Pancreas (tissue), 10 donors: ENCODE measurements at regions of chr14 and their contacts with region 1.

Region 1: DNA sequence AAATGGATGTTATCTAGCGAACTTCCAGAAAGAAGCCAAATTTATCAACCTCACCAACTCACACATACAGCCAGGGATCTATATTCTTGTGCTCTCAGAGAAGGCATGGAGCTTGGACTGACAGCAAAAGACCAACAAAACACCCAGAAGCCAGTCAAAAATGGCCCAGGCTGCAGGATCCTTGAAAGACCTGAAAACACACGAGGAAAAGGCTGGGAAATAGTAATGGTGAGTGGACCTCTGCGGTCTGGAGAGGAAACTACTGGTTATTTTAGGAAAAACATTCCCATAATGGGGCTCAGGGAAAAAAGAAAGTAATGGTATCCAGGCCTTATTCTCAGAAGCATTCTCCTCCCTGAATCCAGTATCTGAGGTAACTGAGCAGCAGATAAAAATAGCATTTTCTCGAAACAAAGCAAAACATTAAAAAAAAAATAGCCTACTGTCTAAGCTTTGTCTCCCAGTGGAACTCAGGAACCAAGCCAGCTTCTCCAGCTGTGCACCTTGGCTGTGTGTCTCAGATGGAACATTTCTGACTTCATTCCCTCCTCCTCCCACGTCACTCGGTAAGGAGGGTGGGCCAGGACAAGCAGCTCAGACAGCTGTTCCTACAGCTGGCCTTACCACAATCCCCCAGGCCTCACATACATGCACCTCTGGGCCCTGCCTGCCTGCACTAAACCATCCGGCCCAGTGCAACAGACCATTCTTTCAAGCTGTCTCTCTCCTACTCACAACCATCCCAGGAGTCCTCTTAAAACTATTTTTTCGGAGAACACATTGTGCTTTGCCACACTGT is 249.9 kb downstream of the DAD1 start:
- DNase-seq: peak in 2 of 6 donors; percentile 23 to 43
- ATAC-seq: peak in 3 of 4 donors; percentile 56 to 62 (median 58)
- H3K4me3 ChIP-seq: no peak overlapping the region
- H3K27ac ChIP-seq: no peak overlapping the region
- H3K4me1 ChIP-seq: peaks cover 0 to 7% (median 0%) of the 10 kb centered on the region in 3 donors
- H3K27me3 ChIP-seq: no peaks in the 10 kb centered on the region
- CTCF ChIP-seq: no peak

Region 2: GRCh38 chr14:22370084-22370847 is 31.1 kb after region 1 on chr14:
- intact Hi-C with region 1: loop called in 1 of 3 experiments (anchors 5 kb)
- DNase-seq: peak in 3 of 6 donors; percentile 9 to 64 (median 34)
- ATAC-seq: peak; percentile 48 to 93 (median 76)
- H3K4me3 ChIP-seq: no peak overlapping the region
- H3K27ac ChIP-seq: peak overlapping the region in 2 of 4 donors; percentile 51 to 64
- H3K4me1 ChIP-seq: peaks cover 0 to 3% (median 0%) of the 10 kb centered on the region in 3 donors
- H3K27me3 ChIP-seq: no peaks in the 10 kb centered on the region
- CTCF ChIP-seq: no peak

Region 3: DNA sequence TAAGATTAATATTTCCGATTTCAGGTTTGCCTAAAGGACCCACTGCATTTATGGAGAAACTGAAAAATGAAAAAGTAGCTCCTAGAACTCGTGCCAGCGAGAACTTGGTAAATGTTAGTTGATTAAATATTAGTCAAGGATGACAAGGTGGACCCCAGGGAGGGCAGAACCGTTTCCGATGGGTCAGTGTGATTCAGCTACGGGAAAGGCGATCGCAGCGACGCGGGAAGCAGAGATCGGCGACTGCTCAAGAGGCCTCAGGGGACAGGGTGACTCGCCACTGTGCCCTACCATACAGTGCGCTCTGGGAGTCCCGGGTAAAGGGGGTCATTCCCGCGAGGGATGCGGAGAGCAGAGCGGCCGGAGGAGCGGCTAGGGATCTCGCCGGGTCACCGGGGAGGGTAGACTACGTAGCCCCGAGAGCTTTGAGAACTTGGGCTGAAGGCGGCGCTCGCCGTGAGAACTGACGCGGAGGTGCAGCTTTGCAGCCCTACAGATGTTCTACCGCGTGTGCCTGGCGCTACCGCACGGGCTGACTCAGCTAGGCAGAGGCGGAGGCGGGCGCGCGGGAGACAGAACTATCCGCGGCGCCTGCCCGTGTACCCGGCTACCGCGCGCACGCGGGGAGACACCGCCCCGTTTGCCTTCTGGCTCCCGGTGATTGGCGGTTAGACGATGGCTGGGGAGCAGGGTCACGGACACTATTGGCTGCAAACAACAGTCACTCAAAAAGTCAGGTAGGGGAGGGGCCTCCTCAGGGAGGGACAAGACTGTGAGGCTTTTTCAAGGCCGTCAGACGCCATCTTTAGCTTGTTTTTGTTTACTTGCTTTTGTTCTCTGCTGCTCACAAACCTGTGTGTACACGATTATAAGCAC is 667.7 kb after region 1 on chr14:
- intact Hi-C with region 1: no loop called
- DNase-seq: peak; percentile 93 to 97 (median 96)
- ATAC-seq: peak; percentile 95 to 98 (median 96)
- H3K4me3 ChIP-seq: peak overlapping the region; percentile 52 to 73 (median 66)
- H3K27ac ChIP-seq: peak overlapping the region; percentile 88 to 97 (median 94)
- H3K4me1 ChIP-seq: peaks cover 4 to 17% (median 10%) of the 10 kb centered on the region in 3 donors
- H3K27me3 ChIP-seq: no peaks in the 10 kb centered on the region
- CTCF ChIP-seq: no peak